A549 (cell line): ENCODE measurements at regions of chr12 and their contacts with region 1.

Region 1: GRCh38 chr12:109920261-109920780 is 20.2 kb downstream of the TCHP start:
- DNase-seq: no peak
- ATAC-seq: no peak
- H3K4me3 ChIP-seq: no peak overlapping the region
- H3K27ac ChIP-seq: no peak overlapping the region
- H3K4me1 ChIP-seq: no peaks in the 10 kb centered on the region
- CTCF ChIP-seq: no peak
- EP300 ChIP-seq: no peak
- POLR2A ChIP-seq: no peak
- RAD21 ChIP-seq: no peak

Region 2: GRCh38 chr12:109932878-109933503 is 12.7 kb after region 1 on chr12:
- CTCF ChIA-PET with region 1: interaction called, 16 read pairs
- POLR2A ChIA-PET with region 1: no interaction called
- DNase-seq: no peak
- ATAC-seq: no peak
- H3K4me3 ChIP-seq: no peak overlapping the region
- H3K27ac ChIP-seq: no peak overlapping the region
- H3K4me1 ChIP-seq: no peaks in the 10 kb centered on the region
- CTCF ChIP-seq: no peak
- EP300 ChIP-seq: no peak
- POLR2A ChIP-seq: no peak
- RAD21 ChIP-seq: no peak